HEK293 (cell line): ENCODE measurements at regions of chr19 and their contacts with region 1.

Region 1: DNA sequence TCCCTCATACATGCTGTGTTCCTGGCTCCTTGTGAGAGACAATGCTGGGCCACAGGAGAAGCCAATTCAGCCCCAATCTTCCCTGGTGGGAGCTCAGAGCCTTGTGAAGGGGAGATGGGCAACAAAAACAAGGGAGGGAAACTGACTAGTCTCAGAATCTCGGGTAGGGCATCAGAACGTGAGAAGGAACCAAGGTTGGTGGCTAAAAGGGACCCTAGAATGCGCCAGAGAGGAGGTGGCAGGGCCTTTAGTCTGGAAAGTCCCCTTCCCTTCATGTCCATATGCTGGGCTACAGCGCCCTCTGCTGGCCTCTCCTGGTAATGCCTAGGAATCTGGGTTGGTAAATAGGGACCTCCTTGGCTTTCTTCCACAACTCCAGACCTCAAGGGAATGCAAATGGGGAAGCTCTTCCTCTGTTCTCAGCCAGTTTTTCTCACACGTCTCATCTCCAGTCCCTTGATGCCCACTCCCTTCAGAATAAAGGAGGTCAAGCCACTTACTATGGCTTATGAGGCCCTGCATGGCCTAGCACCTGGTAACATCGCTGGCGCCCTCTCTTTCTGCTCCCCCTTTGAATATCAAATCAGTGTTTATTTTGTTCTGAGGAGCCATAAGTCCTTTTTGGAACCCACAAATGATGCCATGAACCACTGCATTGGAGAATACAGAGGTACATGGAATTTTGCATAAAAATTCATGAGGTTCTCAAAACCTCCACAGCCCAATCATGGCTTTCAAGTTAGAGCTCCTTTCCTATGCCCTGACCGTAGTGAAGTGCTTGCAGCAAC is 1.4 kb upstream of the CCDC97 start:
- H3K4me3 ChIP-seq: no peak overlapping the region
- H3K27ac ChIP-seq: peak overlapping the region; percentile 98
- H3K4me1 ChIP-seq: peaks cover 20% of the 10 kb centered on the region
- CTCF ChIP-seq: peak; percentile 96

Region 2: GRCh38 chr19:40650749-40651305 is 657.8 kb before region 1 on chr19:
- CTCF ChIA-PET with region 1: no interaction called
- POLR2A ChIA-PET with region 1: no interaction called
- H3K4me3 ChIP-seq: no peak overlapping the region
- H3K27ac ChIP-seq: no peak overlapping the region
- H3K4me1 ChIP-seq: peaks cover 11% of the 10 kb centered on the region
- CTCF ChIP-seq: no peak

Region 3: GRCh38 chr19:41276231-41276630 is 32.4 kb before region 1 on chr19:
- CTCF ChIA-PET with region 1: interaction called, 11 read pairs
- POLR2A ChIA-PET with region 1: interaction called, 5 read pairs
- H3K4me3 ChIP-seq: no peak overlapping the region
- H3K27ac ChIP-seq: no peak overlapping the region
- H3K4me1 ChIP-seq: no peaks in the 10 kb centered on the region
- CTCF ChIP-seq: no peak

Region 4: GRCh38 chr19:41298348-41298964 is 10.1 kb before region 1 on chr19:
- CTCF ChIA-PET with region 1: interaction called, 120 read pairs
- POLR2A ChIA-PET with region 1: no interaction called
- H3K4me3 ChIP-seq: no peak overlapping the region
- H3K27ac ChIP-seq: peak overlapping the region; percentile 52; the same call in 1 of the 2 replicates
- H3K4me1 ChIP-seq: no peaks in the 10 kb centered on the region
- CTCF ChIP-seq: no peak

Region 5: GRCh38 chr19:41363753-41364523 is 55.4 kb after region 1 on chr19 and contains the start of gene B9D2:
- CTCF ChIA-PET with region 1: interaction called, 7 read pairs
- POLR2A ChIA-PET with region 1: interaction called, 11 read pairs
- H3K4me3 ChIP-seq: peak within 1 kb of the TSS; percentile 72
- H3K27ac ChIP-seq: peak within 1 kb of the TSS; percentile 74
- H3K4me1 ChIP-seq: 0 out of 2 replicates have a peak, but pooled peaks cover 5% of the 10 kb centered on the region
- CTCF ChIP-seq: no peak